ENCODE measurements at regions of chr1 and their contacts with region 1.

Region 1: DNA sequence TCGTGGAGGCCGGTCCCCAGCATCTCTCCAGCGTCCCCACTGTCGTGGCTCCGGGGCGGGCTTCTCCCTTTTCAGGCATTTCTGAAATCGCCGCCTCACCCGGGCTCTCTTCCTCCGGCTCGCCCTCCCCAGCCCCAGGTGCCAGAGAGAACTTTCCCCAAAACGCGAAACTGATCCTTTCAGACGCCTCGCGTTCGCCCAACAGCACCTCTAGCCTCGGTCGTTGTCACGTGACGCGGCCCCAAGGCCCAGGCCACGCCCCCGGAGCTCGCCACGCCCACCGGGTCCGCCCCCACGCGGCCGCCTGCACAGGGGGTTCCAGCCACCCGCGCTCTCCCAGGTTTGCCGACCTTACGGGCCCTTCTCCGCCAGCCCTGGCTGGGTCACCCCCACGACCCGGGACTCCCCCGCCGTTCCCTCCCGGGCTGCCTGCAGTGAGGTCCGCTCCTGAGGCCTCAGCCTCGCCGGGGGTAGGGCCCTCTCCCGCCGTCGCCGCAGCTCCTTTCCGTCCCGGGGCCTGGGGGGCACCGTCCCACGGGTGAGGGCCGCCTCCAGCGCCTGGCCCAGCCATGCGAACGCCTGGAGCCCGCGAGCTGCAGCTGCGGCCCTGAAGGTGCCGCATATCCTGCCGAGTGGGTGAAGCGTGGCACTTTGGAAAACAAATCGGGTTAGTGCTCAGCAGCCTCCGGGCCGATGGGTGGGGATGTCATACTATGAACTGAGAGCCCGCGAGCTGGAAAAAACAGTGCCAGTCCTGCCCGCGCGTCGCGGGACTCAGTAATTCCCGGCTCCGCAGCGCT is 21.0 kb downstream of the H3-3A start:
- DNase-seq: peak; percentile 90
- ATAC-seq: peak; percentile 89
- H3K4me3 ChIP-seq: peak overlapping the region; percentile 84
- H3K27ac ChIP-seq: peak overlapping the region; percentile 58
- H3K4me1 ChIP-seq: peaks cover 10% of the 10 kb centered on the region
- H3K27me3 ChIP-seq: no peaks in the 10 kb centered on the region
- CTCF ChIP-seq: no peak; the same call in 1 of the 2 replicates

Region 2: GRCh38 chr1:225923692-225924555 is 159.6 kb before region 1 on chr1 and contains the start of gene PYCR2:
- CTCF ChIA-PET with region 1: no interaction called
- POLR2A ChIA-PET with region 1: no interaction called
- intact Hi-C with region 1: no loop called
- DNase-seq: peak; percentile 99
- ATAC-seq: peak; percentile 91
- H3K4me3 ChIP-seq: peak within 1 kb of the TSS; percentile 89
- H3K27ac ChIP-seq: peak within 1 kb of the TSS; percentile 72
- H3K4me1 ChIP-seq: peaks cover 46% of the 10 kb centered on the region
- H3K27me3 ChIP-seq: no peaks in the 10 kb centered on the region
- CTCF ChIP-seq: no peak
- total RNA-seq, gene PYCR2: 57.7 and 69.0 TPM in 2 replicates

Region 3: DNA sequence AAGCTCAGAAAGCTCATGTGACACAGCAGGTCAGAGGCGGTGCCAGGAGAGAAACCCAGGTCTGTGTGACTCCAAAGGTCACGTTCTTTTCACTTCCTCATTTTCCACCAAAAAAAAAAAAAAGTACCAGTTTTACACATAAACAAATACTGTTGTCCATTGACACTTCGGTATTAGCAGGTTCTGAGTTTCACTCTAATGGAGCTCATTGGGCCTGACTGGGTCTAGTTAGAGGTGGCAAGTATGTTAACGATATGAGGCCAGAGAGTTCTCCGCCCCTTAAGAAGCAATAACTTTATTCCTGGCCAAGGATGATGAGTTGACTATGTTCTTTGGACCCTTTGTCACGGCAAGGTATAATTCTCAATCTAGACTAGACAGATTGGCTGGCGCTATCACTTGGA is 54.4 kb before region 1 on chr1:
- CTCF ChIA-PET with region 1: no interaction called
- POLR2A ChIA-PET with region 1: no interaction called
- intact Hi-C with region 1: no loop called
- DNase-seq: no peak
- ATAC-seq: no peak
- H3K4me3 ChIP-seq: no peak overlapping the region
- H3K27ac ChIP-seq: no peak overlapping the region
- H3K4me1 ChIP-seq: no peaks in the 10 kb centered on the region
- H3K27me3 ChIP-seq: no peaks in the 10 kb centered on the region
- CTCF ChIP-seq: no peak

Region 4: GRCh38 chr1:226109829-226110248 is 26.3 kb after region 1 on chr1:
- CTCF ChIA-PET with region 1: interaction called, 5 read pairs
- POLR2A ChIA-PET with region 1: no interaction called
- intact Hi-C with region 1: loop called (anchors 2 kb)
- DNase-seq: peak; percentile 97
- ATAC-seq: peak; percentile 88
- H3K4me3 ChIP-seq: peak overlapping the region; percentile 79
- H3K27ac ChIP-seq: peak overlapping the region; percentile 71
- H3K4me1 ChIP-seq: peaks cover 29% of the 10 kb centered on the region
- H3K27me3 ChIP-seq: no peaks in the 10 kb centered on the region
- CTCF ChIP-seq: peak; percentile 41

Region 5: GRCh38 chr1:227828786-227829185 is 1745.3 kb after region 1 on chr1:
- CTCF ChIA-PET with region 1: no interaction called
- POLR2A ChIA-PET with region 1: interaction called, 18 read pairs
- intact Hi-C with region 1: no loop called
- DNase-seq: no peak
- ATAC-seq: no peak
- H3K4me3 ChIP-seq: no peak overlapping the region
- H3K27ac ChIP-seq: no peak overlapping the region
- H3K4me1 ChIP-seq: no peaks in the 10 kb centered on the region
- H3K27me3 ChIP-seq: peaks cover 8% of the 10 kb centered on the region; the same call in 1 of the 2 replicates
- CTCF ChIP-seq: no peak